ENCODE measurements at regions of chrX and their contacts with region 1.

Region 1: GRCh38 chrX:87664381-87664780 is 146.8 kb downstream of the KLHL4 start:
- DNase-seq: no peak
- H3K4me3 ChIP-seq: no peak overlapping the region
- H3K27ac ChIP-seq: no peak overlapping the region
- H3K4me1 ChIP-seq: no peaks in the 10 kb centered on the region
- H3K27me3 ChIP-seq: no peaks in the 10 kb centered on the region
- CTCF ChIP-seq: peak in 2 of 3 experiments; percentile 35 to 56

Region 2: DNA sequence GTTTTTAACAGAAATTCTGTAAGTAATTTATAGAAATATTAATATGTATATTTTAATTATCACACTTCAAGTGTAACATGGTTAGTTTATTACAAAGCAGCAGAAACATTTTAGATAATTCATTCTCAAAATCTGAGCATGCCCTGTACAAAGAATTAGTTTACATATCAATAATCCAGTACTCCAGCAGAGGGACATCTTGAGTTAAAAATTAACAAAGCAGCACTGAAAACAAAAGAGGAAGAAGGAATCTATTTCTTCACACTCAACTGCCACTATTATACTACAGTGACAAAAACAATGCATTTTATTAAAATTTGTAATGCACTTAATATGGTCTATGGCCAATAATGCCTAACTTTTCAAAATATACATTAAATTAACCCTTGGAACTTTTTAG is 325.9 kb before region 1 on chrX:
- intact Hi-C with region 1: loop called (anchors 2 kb)
- DNase-seq: no peak
- H3K4me3 ChIP-seq: no peak overlapping the region
- H3K27ac ChIP-seq: no peak overlapping the region
- H3K4me1 ChIP-seq: no peaks in the 10 kb centered on the region
- H3K27me3 ChIP-seq: no peaks in the 10 kb centered on the region
- CTCF ChIP-seq: peak in 1 of 3 experiments; percentile 34

Region 3: DNA sequence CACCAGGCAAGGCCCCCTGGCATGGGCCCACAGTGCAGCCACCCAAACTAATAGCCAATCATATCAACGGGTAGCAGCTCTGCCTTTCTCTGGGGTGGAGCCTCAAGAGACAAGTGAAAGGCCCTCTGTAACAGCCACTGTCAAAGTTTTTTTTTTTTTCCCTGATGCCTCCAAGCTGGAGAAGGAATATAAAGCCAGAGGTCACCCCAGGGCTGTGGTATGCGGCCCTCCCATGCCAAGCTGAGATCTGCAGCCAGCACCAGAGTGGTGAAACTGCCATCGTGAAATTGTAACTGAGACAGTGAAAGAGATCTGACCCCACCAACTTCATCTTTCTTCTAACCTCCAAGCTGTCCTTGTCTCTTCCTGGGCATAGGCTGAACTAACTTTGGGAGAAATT is 260.2 kb after region 1 on chrX:
- intact Hi-C with region 1: no loop called
- DNase-seq: no peak
- H3K4me3 ChIP-seq: no peak overlapping the region
- H3K27ac ChIP-seq: no peak overlapping the region
- H3K4me1 ChIP-seq: no peaks in the 10 kb centered on the region
- H3K27me3 ChIP-seq: no peaks in the 10 kb centered on the region
- CTCF ChIP-seq: no peak

Measured in ascending aorta (tissue), 2 donors.